ENCODE measurements at regions of chr13 and their contacts with region 1.

Region 1: DNA sequence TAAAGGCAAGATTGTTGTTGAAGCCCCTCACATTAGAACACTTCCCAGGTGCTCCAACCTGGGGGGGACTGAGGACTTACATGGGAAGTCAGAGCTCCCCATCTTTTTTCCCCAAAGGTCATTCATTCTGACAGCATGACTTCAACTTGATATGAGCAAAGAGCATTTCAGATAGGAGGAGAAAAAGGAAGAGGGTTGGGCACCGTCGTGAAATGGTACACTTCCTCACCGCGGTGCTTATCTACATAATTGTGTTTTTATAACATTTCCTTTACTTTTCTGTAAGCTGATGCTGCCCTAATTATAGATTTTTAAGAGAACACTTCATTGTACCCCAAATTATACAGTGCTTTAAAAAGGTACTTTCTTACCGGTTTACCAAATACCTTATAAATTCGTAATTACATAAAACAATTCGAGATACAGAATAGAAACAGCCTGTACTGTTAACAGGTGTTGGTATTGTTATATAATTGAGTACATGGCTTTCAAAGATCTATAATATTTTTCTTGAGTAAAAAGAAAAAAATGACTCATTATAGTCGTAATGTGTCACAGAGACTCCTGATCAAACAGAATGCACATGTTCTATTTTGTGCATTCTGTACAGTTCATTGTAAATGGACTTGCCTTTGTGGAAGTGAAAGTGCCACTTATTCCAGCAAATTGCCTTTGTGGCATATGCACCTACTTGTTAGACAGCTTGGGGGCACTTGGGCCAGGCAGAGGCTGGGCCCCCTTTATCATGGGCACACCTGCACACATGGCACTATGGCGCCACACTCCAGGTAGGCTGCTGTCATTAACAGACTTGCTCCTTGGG is 81.8 kb downstream of the GGACT start:
- DNase-seq: no peak
- H3K4me3 Mint-ChIP-seq: peak overlapping the region; percentile 82
- H3K27ac Mint-ChIP-seq: peak overlapping the region; percentile 87
- H3K4me1 Mint-ChIP-seq: peaks cover 63% of the 10 kb centered on the region
- H3K27me3 Mint-ChIP-seq: peaks cover 3% of the 10 kb centered on the region

Region 2: GRCh38 chr13:98810746-98811145 is 1696.1 kb before region 1 on chr13:
- intact Hi-C with region 1: no loop called
- DNase-seq: no peak
- H3K4me3 Mint-ChIP-seq: no peak overlapping the region
- H3K27ac Mint-ChIP-seq: no peak overlapping the region
- H3K4me1 Mint-ChIP-seq: no peaks in the 10 kb centered on the region
- H3K27me3 Mint-ChIP-seq: no peaks in the 10 kb centered on the region

Region 3: DNA sequence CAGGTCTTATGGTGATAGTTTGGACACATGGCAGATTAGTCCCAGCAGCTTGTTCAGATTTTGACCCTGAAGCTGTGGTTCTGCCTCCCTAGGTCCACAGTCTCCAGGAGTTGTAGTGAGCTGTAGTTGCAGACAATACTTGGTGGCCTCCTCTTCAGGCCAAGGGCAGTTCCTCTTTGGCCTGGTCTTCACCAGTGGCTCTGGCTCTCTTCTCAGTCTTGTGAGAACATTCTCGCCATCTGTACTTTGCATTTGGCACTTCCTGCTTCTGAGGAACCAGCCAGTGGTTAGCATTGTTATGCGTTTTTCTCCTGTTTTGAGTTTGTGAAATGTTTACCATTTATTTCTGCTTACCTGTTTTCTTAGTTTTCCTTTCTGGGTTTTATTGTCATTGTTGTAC is 377.2 kb before region 1 on chr13:
- intact Hi-C with region 1: loop called (anchors 5 kb)
- DNase-seq: peak; percentile 14
- H3K4me3 Mint-ChIP-seq: peak overlapping the region; percentile 44
- H3K27ac Mint-ChIP-seq: peak overlapping the region; percentile 77
- H3K4me1 Mint-ChIP-seq: peaks cover 39% of the 10 kb centered on the region
- H3K27me3 Mint-ChIP-seq: no peaks in the 10 kb centered on the region

Region 4: GRCh38 chr13:100363874-100364273 is 142.9 kb before region 1 on chr13:
- intact Hi-C with region 1: loop called (anchors 1 kb)
- DNase-seq: no peak
- H3K4me3 Mint-ChIP-seq: no peak overlapping the region
- H3K27ac Mint-ChIP-seq: no peak overlapping the region
- H3K4me1 Mint-ChIP-seq: peaks cover 14% of the 10 kb centered on the region
- H3K27me3 Mint-ChIP-seq: no peaks in the 10 kb centered on the region

Region 5: DNA sequence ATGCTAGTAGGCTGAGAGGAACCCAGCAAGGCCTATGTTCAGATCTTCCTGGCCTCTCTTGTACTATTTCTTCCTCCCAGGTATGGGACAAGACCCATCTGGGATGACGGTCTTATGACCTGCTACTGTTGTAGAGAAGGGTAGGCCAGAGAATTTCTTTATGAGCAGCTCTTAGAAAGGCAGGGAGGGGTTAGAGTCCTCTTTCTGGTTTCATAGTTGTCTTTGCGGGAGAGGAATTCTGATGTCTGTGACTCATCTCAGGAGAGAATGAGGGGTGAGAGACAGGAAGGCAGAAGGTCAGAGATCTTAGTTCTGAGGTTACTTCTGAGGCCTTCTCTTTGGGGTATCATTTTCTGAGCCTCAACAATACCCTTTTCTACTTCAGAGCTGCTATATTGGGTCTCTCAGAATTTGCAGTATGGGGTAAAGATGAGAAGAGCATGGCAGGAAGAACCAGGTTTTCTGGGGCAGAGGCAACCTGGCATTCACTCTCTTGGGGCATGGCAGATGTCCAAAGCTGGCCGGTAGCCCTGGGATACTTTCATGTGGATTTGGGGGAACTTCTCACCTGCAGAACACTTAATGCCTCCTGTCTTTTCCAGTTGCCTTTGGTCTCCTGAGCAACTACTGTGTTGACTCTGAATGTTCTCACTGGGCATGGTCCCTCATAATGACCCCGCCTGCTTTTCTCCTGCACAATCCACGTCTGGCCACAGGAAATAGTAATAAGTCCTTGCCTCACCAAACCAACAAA is 72.6 kb before region 1 on chr13:
- intact Hi-C with region 1: loop called (anchors 2 kb)
- DNase-seq: peak; percentile 16
- H3K4me3 Mint-ChIP-seq: peak overlapping the region; percentile 1
- H3K27ac Mint-ChIP-seq: peak overlapping the region; percentile 56
- H3K4me1 Mint-ChIP-seq: peaks cover 55% of the 10 kb centered on the region
- H3K27me3 Mint-ChIP-seq: no peaks in the 10 kb centered on the region

Region 6: DNA sequence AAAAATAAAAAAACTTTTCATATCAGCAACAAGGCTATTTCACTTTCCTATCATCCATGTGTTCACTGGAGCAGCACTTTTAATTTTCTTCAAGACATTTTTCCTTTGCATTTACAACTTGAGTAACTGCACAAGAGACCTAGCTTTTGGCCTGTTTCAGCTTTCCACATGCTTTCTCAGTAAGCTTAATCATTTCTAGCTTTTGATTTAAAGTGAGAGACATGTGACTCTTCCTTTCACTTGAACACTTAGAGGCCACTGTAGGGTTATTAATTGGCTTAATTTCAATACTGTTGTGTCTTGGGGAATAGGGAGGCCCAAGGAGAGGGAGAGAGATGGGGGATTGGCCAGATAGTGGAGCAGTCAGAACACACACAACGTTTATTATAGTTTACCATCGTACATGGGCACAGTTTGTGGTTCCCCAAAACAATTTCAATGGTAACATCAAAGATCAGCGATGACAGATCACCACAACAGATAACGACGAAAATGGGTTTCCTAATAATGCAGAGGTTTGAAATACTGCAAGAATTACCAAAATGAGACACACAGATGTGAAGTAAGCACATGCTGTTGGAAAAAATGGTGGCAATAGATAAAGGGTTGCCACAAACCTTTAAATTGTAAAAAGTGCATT is 35.8 kb before region 1 on chr13:
- intact Hi-C with region 1: loop called (anchors 2 kb)
- DNase-seq: no peak
- H3K4me3 Mint-ChIP-seq: no peak overlapping the region
- H3K27ac Mint-ChIP-seq: no peak overlapping the region
- H3K4me1 Mint-ChIP-seq: peaks cover 11% of the 10 kb centered on the region
- H3K27me3 Mint-ChIP-seq: no peaks in the 10 kb centered on the region

Region 7: GRCh38 chr13:100483841-100484381 is 22.9 kb before region 1 on chr13:
- intact Hi-C with region 1: loop called (anchors 2 kb)
- DNase-seq: no peak
- H3K4me3 Mint-ChIP-seq: peak overlapping the region; percentile 20
- H3K27ac Mint-ChIP-seq: peak overlapping the region; percentile 33
- H3K4me1 Mint-ChIP-seq: peaks cover 34% of the 10 kb centered on the region
- H3K27me3 Mint-ChIP-seq: no peaks in the 10 kb centered on the region

Region 8: GRCh38 chr13:100899720-100900316 is 393.0 kb after region 1 on chr13:
- intact Hi-C with region 1: no loop called
- DNase-seq: no peak
- H3K4me3 Mint-ChIP-seq: no peak overlapping the region
- H3K27ac Mint-ChIP-seq: no peak overlapping the region
- H3K4me1 Mint-ChIP-seq: no peaks in the 10 kb centered on the region
- H3K27me3 Mint-ChIP-seq: peaks cover 12% of the 10 kb centered on the region